Activated CD4-positive, alpha-beta T cell treated with anti-CD3 and anti-CD28 coated beads for 36 hours (primary cell): ENCODE measurements at regions of chr3 and their contacts with region 1.

Region 1: DNA sequence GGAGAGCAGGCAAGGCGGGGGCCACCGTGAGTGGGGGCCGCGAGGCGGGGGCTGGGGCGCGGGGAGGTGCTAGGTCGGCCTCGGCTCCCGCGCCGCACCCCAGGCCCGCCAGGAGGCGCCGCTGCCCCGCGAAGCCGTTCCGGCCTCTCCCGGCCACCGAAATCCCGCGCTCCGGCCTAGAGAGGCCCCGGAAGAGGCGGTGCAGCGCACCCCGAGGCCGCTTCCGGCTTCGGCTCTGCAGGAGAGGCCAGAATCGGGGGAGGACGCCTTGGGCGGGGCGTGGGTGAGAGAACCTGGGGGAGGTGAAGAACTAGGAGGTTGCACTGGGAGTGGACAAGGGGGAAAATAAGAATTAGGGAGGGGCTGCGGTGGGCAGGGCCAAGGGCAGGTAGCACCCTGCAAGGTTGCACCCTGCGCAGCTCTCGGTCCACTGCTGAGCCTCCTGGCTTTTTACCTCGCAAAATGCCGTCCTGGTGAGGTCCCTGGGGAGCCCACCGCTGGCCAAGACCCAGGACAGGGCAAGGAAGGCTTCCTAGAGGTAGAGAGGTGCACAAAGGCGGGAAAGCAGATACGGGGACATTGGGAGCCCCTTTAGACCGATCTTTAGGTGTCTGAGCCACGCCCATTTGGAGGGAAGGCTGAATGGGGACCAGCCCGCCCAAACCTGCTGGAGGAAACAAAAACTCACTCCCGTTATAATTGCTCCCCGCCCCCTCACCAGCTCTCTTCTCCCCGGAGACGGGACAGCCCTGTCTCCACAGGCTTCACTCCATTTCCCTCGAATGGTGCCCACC is 8.4 kb upstream of the GNAI2 start:
- DNase-seq: peak; percentile 95
- ATAC-seq: peak; percentile 83
- H3K4me3 Mint-ChIP-seq: peak overlapping the region; percentile 79
- H3K27ac Mint-ChIP-seq: peak overlapping the region; percentile 88
- H3K4me1 Mint-ChIP-seq: peaks cover 22% of the 10 kb centered on the region
- H3K27me3 Mint-ChIP-seq: no peaks in the 10 kb centered on the region

Region 2: DNA sequence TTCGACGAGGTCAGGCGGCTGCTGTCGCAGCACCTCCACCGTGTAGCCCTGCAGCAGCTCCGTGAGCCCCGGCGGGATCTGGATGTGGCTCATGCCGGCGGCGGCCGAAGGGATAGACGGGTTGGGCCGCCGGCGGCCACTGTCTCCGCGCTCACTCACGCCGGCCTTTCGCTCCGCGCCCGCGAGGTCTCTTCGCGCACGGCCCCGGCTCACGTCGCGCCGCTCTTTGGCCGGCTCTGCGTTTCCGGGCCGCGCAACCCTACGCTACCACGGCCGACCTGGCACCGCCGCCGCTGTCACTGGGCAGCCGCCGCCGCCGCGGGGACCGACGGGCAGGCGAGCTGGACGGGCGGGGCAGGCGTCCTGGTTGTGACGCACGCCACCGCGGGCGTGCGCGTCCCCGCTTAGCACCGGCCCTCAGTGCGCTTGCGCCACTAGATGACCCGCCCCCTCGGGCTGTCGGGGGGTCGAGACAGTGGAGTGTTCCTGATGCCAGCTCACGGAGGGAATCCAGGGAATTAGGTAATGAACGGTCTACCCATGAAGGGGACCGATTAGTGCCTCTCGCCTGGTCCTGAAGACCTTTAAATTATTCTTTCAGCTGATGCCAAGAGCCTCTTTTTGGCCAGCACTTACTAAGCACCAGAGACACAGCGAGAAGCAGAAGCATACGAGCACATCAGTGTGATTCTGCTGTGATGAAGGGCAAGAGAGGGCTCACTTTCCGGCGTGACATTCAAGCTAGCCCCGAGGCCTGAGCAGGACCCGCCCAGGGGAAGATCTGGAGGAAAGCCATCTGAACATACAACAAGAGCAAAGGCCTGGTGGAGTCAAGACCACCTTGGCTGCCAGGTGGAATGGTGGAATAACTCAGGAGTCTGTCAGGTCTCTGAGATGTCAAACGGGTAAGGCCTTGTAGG is 1379.8 kb before region 1 on chr3 and contains the start of gene PRKAR2A:
- CTCF ChIA-PET with region 1: no interaction called
- POLR2A ChIA-PET with region 1: no interaction called
- intact Hi-C with region 1: loop called in 1 of 2 experiments (anchors 10 kb)
- DNase-seq: peak; percentile 89
- ATAC-seq: peak; percentile 89
- H3K4me3 Mint-ChIP-seq: peak within 1 kb of the TSS; percentile 82
- H3K27ac Mint-ChIP-seq: peak within 1 kb of the TSS; percentile 87
- H3K4me1 Mint-ChIP-seq: peaks cover 26% of the 10 kb centered on the region
- H3K27me3 Mint-ChIP-seq: no peaks in the 10 kb centered on the region
- total RNA-seq, gene PRKAR2A: 28.7 to 35.2 TPM

Region 3: GRCh38 chr3:50121416-50122032 is 106.1 kb before region 1 on chr3:
- CTCF ChIA-PET with region 1: interaction called, 4 read pairs
- POLR2A ChIA-PET with region 1: no interaction called
- intact Hi-C with region 1: loop called in 1 of 2 experiments (anchors 1 kb)
- DNase-seq: peak; percentile 87
- ATAC-seq: peak; percentile 93
- H3K4me3 Mint-ChIP-seq: no peak overlapping the region
- H3K27ac Mint-ChIP-seq: no peak overlapping the region
- H3K4me1 Mint-ChIP-seq: no peaks in the 10 kb centered on the region
- H3K27me3 Mint-ChIP-seq: no peaks in the 10 kb centered on the region

Region 4: GRCh38 chr3:50245831-50246516 is 18.4 kb after region 1 on chr3:
- CTCF ChIA-PET with region 1: interaction called, 76 read pairs
- POLR2A ChIA-PET with region 1: interaction called, 7 read pairs
- intact Hi-C with region 1: loop called (anchors 1 kb)
- DNase-seq: peak; percentile 98
- ATAC-seq: peak; percentile 76
- H3K4me3 Mint-ChIP-seq: peak overlapping the region; percentile 75
- H3K27ac Mint-ChIP-seq: peak overlapping the region; percentile 95
- H3K4me1 Mint-ChIP-seq: peaks cover 84% of the 10 kb centered on the region
- H3K27me3 Mint-ChIP-seq: no peaks in the 10 kb centered on the region

Region 5: GRCh38 chr3:50272911-50273693 is 45.5 kb after region 1 on chr3:
- CTCF ChIA-PET with region 1: interaction called, 4 read pairs
- POLR2A ChIA-PET with region 1: no interaction called
- intact Hi-C with region 1: loop called (anchors 1 kb)
- DNase-seq: peak; percentile 96
- ATAC-seq: peak; percentile 87
- H3K4me3 Mint-ChIP-seq: peak overlapping the region; percentile 68
- H3K27ac Mint-ChIP-seq: peak overlapping the region; percentile 58
- H3K4me1 Mint-ChIP-seq: peaks cover 25% of the 10 kb centered on the region
- H3K27me3 Mint-ChIP-seq: peaks cover 37% of the 10 kb centered on the region